IMR-90 (cell line): ENCODE measurements at regions of chr14 and their contacts with region 1.

Region 1: DNA sequence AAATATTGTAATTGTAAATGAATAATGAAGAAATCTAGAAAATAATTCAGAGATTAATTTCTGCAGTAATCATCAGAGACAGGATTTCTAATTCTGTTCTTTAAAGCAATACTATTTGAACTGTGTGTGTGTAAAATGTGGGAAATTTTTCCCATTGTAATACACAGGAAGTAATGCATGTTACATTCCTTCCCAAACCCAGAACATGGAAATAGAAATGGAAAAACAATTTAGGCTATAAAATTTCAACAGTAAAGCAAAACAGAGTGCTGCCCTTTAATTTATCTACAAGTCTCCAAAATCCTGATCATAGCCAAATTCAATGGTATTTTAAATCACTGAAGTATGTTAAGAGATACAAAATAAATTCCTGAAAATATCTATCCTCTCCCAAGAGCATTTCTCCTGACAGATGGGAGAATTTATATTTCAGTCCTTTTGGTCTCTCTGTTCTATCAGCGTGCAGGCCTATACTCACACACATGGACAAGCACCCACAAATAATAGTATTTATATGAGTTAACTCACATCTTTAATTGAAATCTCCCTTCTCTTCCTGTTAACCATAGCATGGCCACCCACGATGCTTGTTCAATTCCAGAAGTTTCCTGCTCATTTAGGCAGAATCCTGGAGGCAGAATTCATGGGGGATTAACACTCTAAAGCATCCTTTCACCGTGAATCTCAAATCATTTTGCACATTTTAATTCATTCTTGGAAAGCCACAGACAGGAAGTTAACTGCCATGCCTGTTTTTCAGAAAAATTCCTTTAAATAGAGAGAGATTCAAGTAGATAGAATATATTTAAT is 1465.4 kb upstream of the FLRT2 start:
- DNase-seq: no peak
- ATAC-seq: no peak
- H3K4me3 ChIP-seq: no peak overlapping the region
- H3K27ac ChIP-seq: no peak overlapping the region
- H3K4me1 ChIP-seq: no peaks in the 10 kb centered on the region
- H3K27me3 ChIP-seq: no peaks in the 10 kb centered on the region
- CTCF ChIP-seq: no peak
- POLR2A ChIP-seq: no peak
- RAD21 ChIP-seq: no peak

Region 2: DNA sequence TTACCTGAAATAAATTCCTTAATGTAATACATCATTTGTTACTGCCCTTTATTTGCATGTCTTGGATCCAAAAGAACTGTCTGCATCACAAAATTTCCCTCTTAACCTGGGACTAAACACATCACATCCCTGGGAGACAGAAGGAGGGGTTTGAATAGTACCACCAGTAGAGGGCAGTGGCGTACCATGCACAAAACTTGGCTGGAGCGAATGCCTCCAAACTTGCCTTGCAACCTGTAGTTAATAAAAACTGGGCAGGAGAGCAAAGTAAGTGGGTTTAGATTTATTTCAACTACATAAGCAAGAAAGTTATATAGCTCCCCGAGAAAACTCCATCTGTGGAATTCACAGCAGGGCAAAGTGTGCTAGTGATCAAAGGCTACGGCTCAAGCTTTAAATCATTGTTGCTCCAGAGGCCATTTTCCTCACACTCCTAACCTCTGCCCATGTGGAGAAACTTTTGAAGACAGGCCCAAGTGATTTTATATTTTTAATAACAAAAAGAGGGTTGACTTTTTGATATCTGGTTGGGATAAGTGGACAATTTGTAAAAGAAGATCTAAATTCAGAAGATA is 1354.2 kb before region 1 on chr14:
- CTCF ChIA-PET with region 1: no interaction called
- POLR2A ChIA-PET with region 1: no interaction called
- dilution Hi-C with region 1: no loop called
- in situ Hi-C with region 1: no loop called
- intact Hi-C with region 1: loop called (anchors 10 kb)
- DNase-seq: peak; percentile 61
- ATAC-seq: peak; percentile 68
- H3K4me3 ChIP-seq: no peak overlapping the region
- H3K27ac ChIP-seq: no peak overlapping the region
- H3K4me1 ChIP-seq: no peaks in the 10 kb centered on the region
- H3K27me3 ChIP-seq: no peaks in the 10 kb centered on the region
- CTCF ChIP-seq: peak; percentile 66
- POLR2A ChIP-seq: no peak
- RAD21 ChIP-seq: peak; percentile 72

Region 3: DNA sequence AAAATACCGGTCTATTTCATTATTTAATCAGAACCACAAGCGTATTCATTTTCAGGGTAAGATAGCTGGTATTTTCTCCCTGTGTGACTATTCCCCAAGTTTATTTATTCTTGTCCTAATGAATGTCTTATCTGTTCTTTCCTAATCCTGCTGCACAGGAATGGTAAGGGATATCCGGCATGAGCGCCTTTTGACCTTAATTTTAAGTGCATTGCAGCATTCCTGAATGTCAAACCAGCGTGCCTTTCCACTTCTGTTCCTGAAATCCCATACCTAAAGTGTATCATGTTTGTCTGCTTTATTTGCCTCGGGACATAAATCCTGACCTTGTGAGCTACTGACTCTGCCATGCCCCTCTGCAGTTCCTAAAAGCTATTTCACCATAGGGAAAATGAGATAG is 247.8 kb before region 1 on chr14:
- CTCF ChIA-PET with region 1: no interaction called
- POLR2A ChIA-PET with region 1: no interaction called
- dilution Hi-C with region 1: no loop called
- in situ Hi-C with region 1: no loop called
- intact Hi-C with region 1: loop called (anchors 10 kb)
- DNase-seq: peak; percentile 74
- ATAC-seq: peak; percentile 90
- H3K4me3 ChIP-seq: no peak overlapping the region
- H3K27ac ChIP-seq: no peak overlapping the region
- H3K4me1 ChIP-seq: peaks cover 1% of the 10 kb centered on the region; the same call in 1 of the 2 replicates
- H3K27me3 ChIP-seq: no peaks in the 10 kb centered on the region
- CTCF ChIP-seq: no peak
- POLR2A ChIP-seq: no peak
- RAD21 ChIP-seq: no peak

Region 4: DNA sequence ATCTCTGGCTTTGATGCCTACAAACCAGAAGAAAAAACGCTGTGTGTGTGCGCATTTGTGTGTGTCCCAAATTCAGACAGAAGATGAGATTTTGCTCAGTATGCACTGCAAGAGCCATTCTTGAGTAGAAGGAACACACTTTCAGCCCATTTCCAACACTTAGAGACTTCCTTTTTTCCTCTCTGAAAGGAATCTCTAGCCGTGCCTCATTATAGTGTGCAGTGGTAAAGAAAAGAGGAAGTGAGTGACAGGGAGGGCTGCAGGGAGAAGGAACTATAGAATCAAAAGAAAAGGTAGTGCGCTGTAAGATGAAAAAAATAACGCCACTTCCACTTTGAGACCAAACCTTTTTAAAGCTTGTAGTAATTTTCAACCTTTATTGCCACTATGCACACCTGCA is 64.5 kb after region 1 on chr14:
- CTCF ChIA-PET with region 1: no interaction called
- POLR2A ChIA-PET with region 1: no interaction called
- dilution Hi-C with region 1: no loop called
- in situ Hi-C with region 1: no loop called
- intact Hi-C with region 1: no loop called
- DNase-seq: no peak
- ATAC-seq: no peak
- H3K4me3 ChIP-seq: no peak overlapping the region
- H3K27ac ChIP-seq: no peak overlapping the region
- H3K4me1 ChIP-seq: 0 out of 2 replicates have a peak, but pooled peaks cover 1% of the 10 kb centered on the region
- H3K27me3 ChIP-seq: no peaks in the 10 kb centered on the region
- CTCF ChIP-seq: no peak
- POLR2A ChIP-seq: no peak
- RAD21 ChIP-seq: no peak